GM10248 (cell line): ENCODE measurements at regions of chr12 and their contacts with region 1.

Region 1: GRCh38 chr12:817941-818600 is 65.7 kb downstream of the WNK1 start:
- DNase-seq: no peak
- CTCF ChIP-seq: no peak

Region 2: GRCh38 chr12:188910-189621 is 629.0 kb before region 1 on chr12:
- CTCF ChIA-PET with region 1: no interaction called
- POLR2A ChIA-PET with region 1: no interaction called
- DNase-seq: peak; percentile 79
- CTCF ChIP-seq: peak; percentile 68

Region 3: DNA sequence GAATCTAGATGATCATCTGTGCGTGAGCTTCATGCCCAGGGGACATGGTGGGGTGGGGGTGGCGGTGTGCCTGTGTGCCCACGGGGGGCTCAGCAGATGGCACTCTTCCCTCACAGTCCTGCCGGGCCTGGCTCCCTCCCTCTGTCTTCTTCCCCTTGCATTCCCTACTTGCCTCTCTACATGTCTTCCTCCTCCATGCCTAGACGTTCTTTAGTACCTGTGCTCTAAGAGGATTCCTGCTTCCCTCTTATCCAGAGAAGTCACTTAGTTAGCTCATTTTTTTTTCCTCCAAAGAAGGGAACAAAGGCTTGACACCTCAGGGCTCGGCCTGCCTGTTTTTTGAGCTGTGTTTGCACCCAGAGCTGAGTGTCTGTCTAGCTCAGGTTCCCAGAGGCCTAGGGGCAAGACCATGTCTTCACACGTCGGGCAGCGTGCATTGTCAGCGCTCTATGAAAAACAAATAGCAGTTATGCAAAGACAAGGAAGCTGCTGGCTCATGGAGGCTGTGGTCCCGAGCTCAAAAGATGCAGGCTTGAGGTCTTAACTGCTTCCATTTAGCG is 203.6 kb before region 1 on chr12:
- CTCF ChIA-PET with region 1: interaction called, 39 read pairs
- POLR2A ChIA-PET with region 1: no interaction called
- DNase-seq: peak; percentile 63
- CTCF ChIP-seq: peak; percentile 59

Region 4: GRCh38 chr12:800401-800800 is 17.7 kb before region 1 on chr12:
- CTCF ChIA-PET with region 1: interaction called, 14 read pairs
- POLR2A ChIA-PET with region 1: no interaction called
- DNase-seq: no peak
- CTCF ChIP-seq: no peak